Left colon (tissue), 2 donors: ENCODE measurements at regions of chr1 and their contacts with region 1.

Region 1: GRCh38 chr1:9867408-9868243 is 42.4 kb downstream of the CTNNBIP1 start:
- DNase-seq: peak; percentile 61 to 89
- ATAC-seq: peak; percentile 84

Region 2: GRCh38 chr1:9629445-9630201 is 238.0 kb before region 1 on chr1:
- intact Hi-C with region 1: loop called in 1 of 2 experiments (anchors 10 kb)
- DNase-seq: peak; percentile 56 to 67
- ATAC-seq: peak; percentile 28

Region 3: GRCh38 chr1:9784508-9785133 is 83.0 kb before region 1 on chr1:
- intact Hi-C with region 1: loop called (anchors 5 to 10 kb)
- DNase-seq: peak in 1 of 2 donors; percentile 58
- ATAC-seq: peak; percentile 76